B cell (primary cell): ENCODE measurements at regions of chr16 and their contacts with region 1.

Region 1: GRCh38 chr16:12319428-12320035 is 343.0 kb downstream of the SNX29 start:
- DNase-seq: no peak
- ATAC-seq: no peak
- H3K4me3 ChIP-seq: no peak overlapping the region
- H3K4me3 Mint-ChIP-seq: no peak overlapping the region
- H3K27ac ChIP-seq: no peak overlapping the region
- H3K27ac Mint-ChIP-seq: peak overlapping the region; percentile 84
- H3K4me1 ChIP-seq: peaks cover 45 to 80% of the 10 kb centered on the region in 2 donors
- H3K4me1 Mint-ChIP-seq: peaks cover 79% of the 10 kb centered on the region
- H3K27me3 ChIP-seq: no peaks in the 10 kb centered on the region
- H3K27me3 Mint-ChIP-seq: no peaks in the 10 kb centered on the region
- CTCF ChIP-seq: no peak

Region 2: GRCh38 chr16:12283596-12283995 is 35.9 kb before region 1 on chr16:
- CTCF ChIA-PET with region 1: no interaction called
- POLR2A ChIA-PET with region 1: no interaction called
- intact Hi-C with region 1: loop called (anchors 5 kb)
- DNase-seq: no peak
- ATAC-seq: no peak
- H3K4me3 ChIP-seq: no peak overlapping the region
- H3K4me3 Mint-ChIP-seq: no peak overlapping the region
- H3K27ac ChIP-seq: no peak overlapping the region
- H3K27ac Mint-ChIP-seq: peak overlapping the region; percentile 88
- H3K4me1 ChIP-seq: peaks cover 13 to 21% of the 10 kb centered on the region in 2 donors
- H3K4me1 Mint-ChIP-seq: peaks cover 28% of the 10 kb centered on the region
- H3K27me3 ChIP-seq: no peaks in the 10 kb centered on the region
- H3K27me3 Mint-ChIP-seq: no peaks in the 10 kb centered on the region
- CTCF ChIP-seq: no peak